ENCODE measurements at regions of chr1 and their contacts with region 1.

Region 1: DNA sequence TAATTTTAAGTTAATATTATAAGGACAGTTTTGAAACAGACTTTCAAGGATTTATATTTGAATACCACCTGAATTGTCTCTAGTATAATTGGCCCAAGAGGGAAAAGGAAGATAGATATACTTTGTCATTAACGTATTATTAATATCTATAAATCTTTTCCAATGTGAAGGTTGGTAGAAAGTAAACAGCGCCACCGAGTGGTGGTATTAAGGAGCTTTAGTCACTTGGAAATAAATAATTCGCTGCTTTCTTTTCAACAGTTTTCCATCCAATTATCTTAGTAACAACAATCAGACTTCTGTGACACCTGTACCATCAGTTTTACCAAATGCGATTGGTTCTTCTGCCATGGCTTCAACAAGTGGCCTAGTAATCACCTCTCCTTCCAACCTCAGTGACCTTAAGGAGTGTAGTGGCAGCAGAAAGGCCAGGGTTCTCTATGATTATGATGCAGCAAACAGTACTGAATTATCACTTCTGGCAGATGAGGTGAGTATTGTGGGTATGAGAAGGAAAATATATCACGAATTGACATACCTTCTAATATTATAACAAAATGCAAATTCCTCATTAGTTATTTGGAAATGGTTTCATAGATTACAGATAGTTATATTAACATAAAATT is 37.7 kb downstream of the SH3GLB1 start:
- DNase-seq: peak; percentile 55
- H3K4me3 Mint-ChIP-seq: no peak overlapping the region
- H3K27ac Mint-ChIP-seq: no peak overlapping the region
- H3K4me1 Mint-ChIP-seq: no peaks in the 10 kb centered on the region
- H3K27me3 Mint-ChIP-seq: no peaks in the 10 kb centered on the region

Region 2: GRCh38 chr1:86419277-86419903 is 322.7 kb before region 1 on chr1:
- CTCF ChIA-PET with region 1: no interaction called
- intact Hi-C with region 1: loop called (anchors 2 kb)
- DNase-seq: peak; percentile 71
- H3K4me3 Mint-ChIP-seq: peak overlapping the region; percentile 60
- H3K27ac Mint-ChIP-seq: no peak overlapping the region
- H3K4me1 Mint-ChIP-seq: peaks cover 4% of the 10 kb centered on the region
- H3K27me3 Mint-ChIP-seq: peaks cover 3% of the 10 kb centered on the region

Region 3: GRCh38 chr1:86470859-86471258 is 271.2 kb before region 1 on chr1:
- CTCF ChIA-PET with region 1: no interaction called
- intact Hi-C with region 1: loop called (anchors 1 kb)
- DNase-seq: no peak
- H3K4me3 Mint-ChIP-seq: no peak overlapping the region
- H3K27ac Mint-ChIP-seq: no peak overlapping the region
- H3K4me1 Mint-ChIP-seq: no peaks in the 10 kb centered on the region
- H3K27me3 Mint-ChIP-seq: peaks cover 1% of the 10 kb centered on the region

Region 4: GRCh38 chr1:86774305-86775295 is 32.5 kb after region 1 on chr1:
- CTCF ChIA-PET with region 1: no interaction called
- intact Hi-C with region 1: loop called (anchors 2 kb)
- DNase-seq: peak; percentile 81
- H3K4me3 Mint-ChIP-seq: no peak overlapping the region
- H3K27ac Mint-ChIP-seq: peak overlapping the region; percentile 17
- H3K4me1 Mint-ChIP-seq: peaks cover 15% of the 10 kb centered on the region
- H3K27me3 Mint-ChIP-seq: no peaks in the 10 kb centered on the region

Region 5: GRCh38 chr1:87140851-87141555 is 398.9 kb after region 1 on chr1:
- CTCF ChIA-PET with region 1: no interaction called
- intact Hi-C with region 1: no loop called
- DNase-seq: no peak
- H3K4me3 Mint-ChIP-seq: no peak overlapping the region
- H3K27ac Mint-ChIP-seq: no peak overlapping the region
- H3K4me1 Mint-ChIP-seq: no peaks in the 10 kb centered on the region
- H3K27me3 Mint-ChIP-seq: peaks cover 8% of the 10 kb centered on the region

Region 6: DNA sequence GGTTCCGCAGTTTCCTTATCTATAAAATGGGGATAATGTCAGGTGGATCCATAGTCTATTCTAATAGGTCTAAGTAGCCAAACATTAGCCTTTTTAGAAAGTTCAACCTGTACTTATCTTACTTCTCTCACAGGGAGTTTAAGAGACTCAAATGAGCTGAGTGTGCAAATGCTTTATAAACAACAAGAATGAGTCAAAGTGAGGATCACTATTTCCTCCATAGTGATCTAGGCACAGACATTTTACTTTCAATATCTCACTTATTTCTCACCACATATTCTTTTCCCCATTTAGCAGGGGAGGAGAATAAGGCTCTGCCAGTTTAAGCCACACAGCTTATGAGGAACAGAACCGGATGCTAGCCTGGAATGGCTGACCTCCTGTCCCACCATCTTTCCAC is 494.5 kb after region 1 on chr1:
- CTCF ChIA-PET with region 1: no interaction called
- intact Hi-C with region 1: no loop called
- DNase-seq: no peak
- H3K4me3 Mint-ChIP-seq: no peak overlapping the region
- H3K27ac Mint-ChIP-seq: no peak overlapping the region
- H3K4me1 Mint-ChIP-seq: no peaks in the 10 kb centered on the region
- H3K27me3 Mint-ChIP-seq: peaks cover 6% of the 10 kb centered on the region

Measured in activated naive CD4-positive, alpha-beta T cell treated with anti-CD3 and anti-CD28 coated beads for 36 hours (primary cell).